Dorsolateral prefrontal cortex (tissue), 120 donors: ENCODE measurements at regions of chr2 and their contacts with region 1.

Region 1: GRCh38 chr2:218659258-218659987 is at the starts of genes BCS1L and ZNF142:
- DNase-seq: peak; percentile 81 to 96 (median 95)
- H3K4me3 ChIP-seq: peak within 1 kb of the TSS; percentile 68 to 99 (median 89)
- H3K27ac ChIP-seq: peak within 1 kb of the TSS in 51 of 59 donors; percentile 11 to 86 (median 66)
- H3K27me3 ChIP-seq: no peaks in the 10 kb centered on the region
- CTCF ChIP-seq: peak in 29 of 56 donors; percentile 10 to 51 (median 27)
- total RNA-seq, gene BCS1L: 21.5 to 56.6 (median 35.8) TPM
- total RNA-seq, gene ZNF142: 32.6 to 56.7 (median 43.4) TPM

Region 2: DNA sequence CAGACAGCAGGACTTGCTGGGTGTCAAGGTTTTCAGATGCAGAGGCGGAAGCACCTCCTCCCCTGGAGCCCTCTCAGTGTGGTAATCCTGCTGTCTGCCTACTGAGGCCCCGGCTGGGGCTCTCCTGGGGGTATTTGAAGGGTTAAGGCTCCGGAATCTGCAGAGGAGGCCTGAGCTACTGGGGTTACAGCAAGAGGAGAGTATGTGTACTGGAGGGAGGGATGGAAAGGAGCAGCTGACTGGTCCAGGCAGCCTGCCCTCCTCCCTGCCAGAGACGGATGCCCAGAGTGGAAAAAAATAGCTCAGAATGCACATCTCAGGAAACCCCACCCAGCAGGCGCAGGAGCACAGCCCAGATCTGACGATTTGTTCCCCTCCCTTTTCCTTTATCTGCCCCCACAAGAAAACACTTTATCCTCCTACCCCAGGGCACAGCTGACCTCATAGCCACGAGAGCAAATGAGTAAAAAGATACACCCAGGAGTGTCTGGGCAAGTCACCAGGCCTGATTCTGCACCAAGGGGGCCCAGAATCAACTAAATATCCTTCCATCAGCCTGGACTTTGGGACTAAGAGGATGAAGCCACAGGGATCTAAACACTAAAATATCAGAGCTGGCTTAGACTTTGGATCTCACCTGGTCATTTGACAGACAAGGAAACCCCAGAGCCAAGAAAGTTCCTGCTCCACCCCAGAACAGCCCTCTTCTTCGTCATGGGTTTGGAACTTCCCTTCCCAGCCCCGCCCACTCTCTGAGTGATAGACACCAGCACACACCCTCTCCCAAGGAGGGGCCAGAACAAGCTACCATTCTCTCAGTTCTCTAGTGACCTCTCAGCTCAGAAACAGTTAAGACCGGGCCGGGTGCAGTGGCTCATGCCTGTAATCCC is 372.6 kb before region 1 on chr2:
- intact Hi-C with region 1: loop called in 1 of 2 experiments (anchors 10 kb)
- DNase-seq: peak; percentile 58 to 90 (median 84)
- H3K4me3 ChIP-seq: peak overlapping the region; percentile 37 to 78 (median 63)
- H3K27ac ChIP-seq: peak overlapping the region; percentile 31 to 100 (median 97)
- H3K27me3 ChIP-seq: no peaks in the 10 kb centered on the region
- CTCF ChIP-seq: peak in 15 of 56 donors; percentile 7 to 46 (median 21)

Region 3: DNA sequence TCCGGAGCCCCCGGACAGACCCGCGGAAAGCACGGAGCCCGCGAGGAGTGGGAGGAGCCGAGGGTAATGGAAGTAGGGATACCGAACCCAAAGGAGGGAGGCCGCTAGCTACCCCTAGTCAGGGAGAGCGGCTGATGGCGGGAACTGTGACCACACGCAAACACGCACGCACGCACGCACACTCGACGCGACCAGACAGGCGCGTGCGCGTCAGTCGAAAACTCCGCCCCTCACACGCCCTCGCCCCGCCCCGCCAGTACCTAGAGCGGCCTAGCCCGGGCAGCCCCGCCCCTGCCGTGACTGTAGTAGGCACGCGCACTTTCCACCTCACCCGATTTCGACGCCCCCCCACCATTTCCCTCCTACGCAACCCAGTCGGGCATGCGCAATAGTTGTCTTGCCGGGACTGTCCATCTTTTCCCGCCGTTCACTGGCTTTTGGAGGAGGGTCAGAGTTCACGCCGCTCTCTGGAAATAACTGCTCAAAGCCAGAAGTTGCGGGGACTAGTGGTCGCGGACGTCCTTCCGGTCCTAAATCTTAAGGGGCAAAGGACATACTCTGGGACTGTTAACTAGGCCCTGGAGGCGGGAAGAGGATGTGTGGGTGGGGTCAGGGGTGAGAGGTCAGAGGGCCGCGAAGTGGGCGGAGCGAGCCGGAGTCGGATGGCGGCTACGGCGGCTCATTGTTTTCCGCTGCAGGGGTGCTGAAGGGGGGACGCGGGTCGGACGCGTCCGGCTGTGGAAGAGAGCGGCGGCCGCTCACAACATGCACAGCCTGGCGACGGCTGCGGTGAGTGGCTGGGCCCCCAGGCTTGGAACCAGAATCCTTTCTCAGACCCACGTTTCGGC is 91.0 kb before region 1 on chr2 and contains the starts of genes CNOT9 and USP37:
- intact Hi-C with region 1: loop called (anchors 5 to 10 kb)
- DNase-seq: peak; percentile 98 to 99 (median 99)
- H3K4me3 ChIP-seq: peak within 1 kb of the TSS; percentile 69 to 99 (median 92)
- H3K27ac ChIP-seq: peak within 1 kb of the TSS; percentile 65 to 98 (median 93)
- H3K27me3 ChIP-seq: no peaks in the 10 kb centered on the region
- CTCF ChIP-seq: peak in 10 of 56 donors; percentile 4 to 32 (median 18)
- total RNA-seq, gene CNOT9: 27.4 to 52.0 (median 37.4) TPM
- total RNA-seq, gene USP37: 15.0 to 42.8 (median 26.7) TPM

Region 4: GRCh38 chr2:218849721-218850120 is 190.3 kb after region 1 on chr2:
- intact Hi-C with region 1: loop called in 1 of 2 experiments (anchors 5 kb)
- DNase-seq: no peak
- H3K4me3 ChIP-seq: no peak overlapping the region
- H3K27ac ChIP-seq: no peak overlapping the region
- H3K27me3 ChIP-seq: peaks cover 0 to 44% (median 10%) of the 10 kb centered on the region in 45 donors
- CTCF ChIP-seq: no peak

Region 5: GRCh38 chr2:219073413-219074129 is 414.1 kb after region 1 on chr2:
- intact Hi-C with region 1: no loop called
- DNase-seq: no peak
- H3K4me3 ChIP-seq: no peak overlapping the region
- H3K27ac ChIP-seq: no peak overlapping the region
- H3K27me3 ChIP-seq: no peaks in the 10 kb centered on the region
- CTCF ChIP-seq: peak in 52 of 56 donors; percentile 15 to 68 (median 49)